ENCODE measurements at regions of chr19 and their contacts with region 1.

Region 1: DNA sequence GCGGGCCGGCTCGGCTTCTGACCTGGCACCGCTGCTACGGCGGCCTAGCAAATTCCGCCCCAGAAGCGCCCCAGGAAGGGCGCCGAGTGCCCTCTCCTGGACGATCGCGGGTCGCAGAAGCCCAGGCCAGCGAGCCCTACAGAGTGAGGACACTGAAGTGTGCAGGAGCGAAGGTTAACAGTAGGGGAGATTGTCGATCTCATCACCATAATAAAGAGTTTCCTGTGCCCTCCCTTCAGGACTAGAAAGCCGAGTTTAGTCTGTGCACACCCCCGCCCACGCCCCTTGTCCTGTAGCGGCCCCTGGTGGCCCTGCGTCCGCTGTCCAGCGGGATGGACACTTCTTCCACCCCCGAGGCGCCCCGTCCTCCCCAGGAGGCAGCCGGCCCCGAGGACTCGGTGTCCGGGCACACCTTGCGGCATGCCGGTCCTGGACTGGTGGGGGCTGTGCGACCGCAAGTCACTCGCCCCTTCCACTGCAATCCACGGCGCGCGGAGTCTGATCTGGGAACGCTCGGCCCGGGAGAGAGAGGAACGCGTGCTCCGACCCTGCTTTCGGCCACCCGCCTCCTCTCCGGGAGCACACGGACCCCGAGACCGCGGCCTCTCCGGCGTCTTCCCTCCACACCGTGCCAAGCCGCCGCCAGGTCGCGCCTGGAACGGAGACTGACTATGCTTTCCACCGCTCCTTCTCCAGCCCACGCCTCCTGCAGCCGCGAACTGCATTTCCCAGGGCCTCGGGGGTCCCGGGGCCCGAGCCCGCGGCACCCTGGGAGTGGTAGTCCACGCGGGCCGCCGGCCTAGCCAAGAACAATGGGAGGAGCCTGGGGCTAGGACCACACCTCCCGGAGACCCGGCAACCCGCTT is 769 bp upstream of the KMT2B start:
- DNase-seq: peak; percentile 97 to 99 (median 98)
- H3K4me3 ChIP-seq: peak overlapping the region; percentile 68 to 81
- H3K4me3 Mint-ChIP-seq: peak overlapping the region; percentile 91 to 99 (median 94)
- H3K27ac ChIP-seq: peak overlapping the region; percentile 71
- H3K27ac Mint-ChIP-seq: peak overlapping the region; percentile 90 to 99 (median 94)
- H3K4me1 ChIP-seq: peaks cover 59% of the 10 kb centered on the region
- H3K4me1 Mint-ChIP-seq: peaks cover 44 to 72% (median 55%) of the 10 kb centered on the region in 4 donors
- H3K27me3 ChIP-seq: no peaks in the 10 kb centered on the region
- H3K27me3 Mint-ChIP-seq: no peaks in the 10 kb centered on the region

Region 2: GRCh38 chr19:35330475-35330874 is 386.6 kb before region 1 on chr19:
- CTCF ChIA-PET with region 1: no interaction called
- POLR2A ChIA-PET with region 1: no interaction called
- intact Hi-C with region 1: no loop called
- DNase-seq: peak in 1 of 5 donors; percentile 18
- H3K4me3 ChIP-seq: no peak overlapping the region
- H3K4me3 Mint-ChIP-seq: no peak overlapping the region
- H3K27ac ChIP-seq: no peak overlapping the region
- H3K27ac Mint-ChIP-seq: no peak overlapping the region
- H3K4me1 ChIP-seq: peaks cover 9% of the 10 kb centered on the region
- H3K4me1 Mint-ChIP-seq: peaks cover 6 to 15% (median 10%) of the 10 kb centered on the region in 4 donors
- H3K27me3 ChIP-seq: no peaks in the 10 kb centered on the region
- H3K27me3 Mint-ChIP-seq: peaks cover 7 to 22% of the 10 kb centered on the region in 2 donors

Region 3: DNA sequence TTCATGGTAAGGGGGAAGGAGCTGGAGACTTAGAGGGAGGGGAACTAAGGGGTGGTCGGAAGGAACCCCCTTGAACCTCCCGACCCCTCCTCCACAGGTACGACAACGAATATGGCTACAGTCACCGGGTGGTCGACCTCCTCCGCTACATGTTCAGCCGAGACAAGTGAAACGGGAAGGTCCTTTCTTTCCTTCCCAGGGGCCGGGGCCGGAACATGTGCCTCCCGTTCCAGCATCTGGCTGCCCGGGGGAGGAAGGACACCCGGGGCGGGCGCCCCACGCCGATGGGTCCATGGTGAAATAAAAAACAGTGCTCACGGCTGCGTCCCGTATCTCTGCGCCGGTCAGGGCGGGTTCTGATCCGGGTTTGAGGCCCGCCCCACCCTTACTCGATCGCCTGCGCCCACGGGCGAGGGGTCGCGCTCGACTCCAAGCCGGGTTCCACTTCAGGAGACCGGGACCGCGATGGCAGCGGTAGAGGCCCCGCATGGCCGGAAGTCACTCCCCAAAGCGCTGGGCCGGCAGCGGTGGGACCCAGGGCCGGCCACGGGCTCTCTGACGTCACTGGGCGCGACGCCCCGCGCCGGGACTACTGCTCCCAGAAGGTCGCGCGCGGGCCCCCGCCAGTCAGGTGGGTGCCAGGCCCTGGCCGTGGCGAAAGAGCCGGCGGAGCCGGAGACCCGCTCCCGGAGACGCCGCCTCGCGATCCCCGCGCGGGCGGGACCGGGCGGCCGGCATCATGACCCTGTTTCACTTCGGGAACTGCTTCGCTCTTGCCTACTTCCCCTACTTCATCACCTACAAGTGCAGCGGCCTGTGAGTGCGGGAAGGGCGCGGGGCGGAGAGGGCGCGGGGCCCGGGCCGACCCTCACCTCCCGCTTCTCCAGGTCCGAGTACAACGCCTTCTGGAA is 171.8 kb before region 1 on chr19 and contains the start of gene TMEM147:
- CTCF ChIA-PET with region 1: no interaction called
- POLR2A ChIA-PET with region 1: no interaction called
- intact Hi-C with region 1: loop called (anchors 1 kb)
- DNase-seq: peak; percentile 68 to 76 (median 73)
- H3K4me3 ChIP-seq: peak within 1 kb of the TSS; percentile 36 to 84
- H3K4me3 Mint-ChIP-seq: peak within 1 kb of the TSS; percentile 87 to 92 (median 90)
- H3K27ac ChIP-seq: peak within 1 kb of the TSS; percentile 76
- H3K27ac Mint-ChIP-seq: peak within 1 kb of the TSS; percentile 87 to 96 (median 93)
- H3K4me1 ChIP-seq: peaks cover 24% of the 10 kb centered on the region
- H3K4me1 Mint-ChIP-seq: peaks cover 23 to 46% (median 33%) of the 10 kb centered on the region in 4 donors
- H3K27me3 ChIP-seq: no peaks in the 10 kb centered on the region
- H3K27me3 Mint-ChIP-seq: no peaks in the 10 kb centered on the region
- total RNA-seq, gene TMEM147: 41.3 to 41.9 TPM

Region 4: GRCh38 chr19:35693830-35694599 is 23.0 kb before region 1 on chr19:
- CTCF ChIA-PET with region 1: interaction called, 54 read pairs
- POLR2A ChIA-PET with region 1: interaction called, 3 read pairs
- intact Hi-C with region 1: loop called (anchors 1 kb)
- DNase-seq: peak; percentile 87 to 89 (median 88)
- H3K4me3 ChIP-seq: no peak overlapping the region
- H3K4me3 Mint-ChIP-seq: peak overlapping the region in 1 of 8 donors; percentile 57
- H3K27ac ChIP-seq: no peak overlapping the region
- H3K27ac Mint-ChIP-seq: peak overlapping the region in 6 of 7 donors; percentile 4 to 75 (median 28)
- H3K4me1 ChIP-seq: no peaks in the 10 kb centered on the region
- H3K4me1 Mint-ChIP-seq: peaks cover 0 to 5% (median 2%) of the 10 kb centered on the region in 4 donors
- H3K27me3 ChIP-seq: no peaks in the 10 kb centered on the region
- H3K27me3 Mint-ChIP-seq: no peaks in the 10 kb centered on the region

Region 5: GRCh38 chr19:35731358-35731757 is 14.3 kb after region 1 on chr19:
- CTCF ChIA-PET with region 1: interaction called, 5 read pairs
- POLR2A ChIA-PET with region 1: interaction called, 16 read pairs
- intact Hi-C with region 1: no loop called
- DNase-seq: no peak
- H3K4me3 ChIP-seq: no peak overlapping the region
- H3K4me3 Mint-ChIP-seq: no peak overlapping the region
- H3K27ac ChIP-seq: no peak overlapping the region
- H3K27ac Mint-ChIP-seq: peak overlapping the region in 3 of 7 donors; percentile 29 to 81 (median 43)
- H3K4me1 ChIP-seq: peaks cover 3% of the 10 kb centered on the region
- H3K4me1 Mint-ChIP-seq: peaks cover 4 to 17% (median 9%) of the 10 kb centered on the region in 4 donors
- H3K27me3 ChIP-seq: no peaks in the 10 kb centered on the region
- H3K27me3 Mint-ChIP-seq: no peaks in the 10 kb centered on the region

Region 6: DNA sequence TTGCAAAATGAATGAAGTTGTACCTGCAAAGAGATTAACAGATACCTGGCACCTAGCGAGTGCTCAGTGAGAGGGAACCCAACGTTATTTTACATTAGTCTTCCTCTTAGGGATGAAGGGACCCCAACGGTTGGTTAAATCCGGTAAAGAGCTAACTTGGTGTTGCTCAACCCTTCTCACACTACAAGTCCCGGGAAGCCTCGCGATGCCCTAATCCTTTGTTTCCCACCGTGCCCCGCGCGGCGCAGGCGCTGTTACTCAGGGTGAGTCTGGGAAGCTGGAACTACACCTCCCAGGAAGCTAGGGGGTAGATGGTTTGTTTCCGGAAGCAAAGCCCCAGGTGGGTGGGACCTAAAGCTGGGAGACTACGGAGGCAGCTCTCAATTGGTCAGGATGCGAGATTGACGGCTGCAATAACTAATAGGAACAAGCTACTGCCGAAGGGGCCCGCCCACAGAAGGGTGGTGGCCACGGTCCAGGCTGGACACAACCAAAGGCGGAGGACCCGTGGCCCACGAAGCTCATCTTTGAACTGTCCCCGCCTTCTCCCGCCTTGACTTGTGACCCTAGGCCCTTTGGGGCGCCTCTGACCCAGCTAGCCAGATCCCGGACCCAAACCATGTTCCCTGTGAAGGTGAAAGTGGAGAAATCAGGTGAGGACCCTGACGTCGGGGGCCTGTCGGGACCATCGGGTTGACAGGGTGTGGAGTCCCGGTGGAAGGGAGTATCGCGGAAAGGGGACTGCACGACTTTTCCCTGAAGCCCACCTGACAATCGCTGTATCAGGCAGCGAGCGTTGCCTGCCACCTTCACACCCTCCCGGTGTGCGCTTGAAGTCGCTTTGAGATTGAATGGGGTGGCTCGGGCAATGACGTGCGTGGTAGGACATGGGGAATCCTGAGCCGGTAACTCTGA is 31.3 kb after region 1 on chr19 and contains the start of gene LIN37:
- CTCF ChIA-PET with region 1: interaction called, 3 read pairs
- POLR2A ChIA-PET with region 1: interaction called, 51 read pairs
- intact Hi-C with region 1: loop called (anchors 1 kb)
- DNase-seq: peak; percentile 98 to 100 (median 99)
- H3K4me3 ChIP-seq: peak within 1 kb of the TSS; percentile 63 to 93
- H3K4me3 Mint-ChIP-seq: peak within 1 kb of the TSS; percentile 97 to 99 (median 98)
- H3K27ac ChIP-seq: peak within 1 kb of the TSS; percentile 82
- H3K27ac Mint-ChIP-seq: peak within 1 kb of the TSS; percentile 88 to 98 (median 97)
- H3K4me1 ChIP-seq: peaks cover 42% of the 10 kb centered on the region
- H3K4me1 Mint-ChIP-seq: peaks cover 25 to 49% (median 39%) of the 10 kb centered on the region in 4 donors
- H3K27me3 ChIP-seq: no peaks in the 10 kb centered on the region
- H3K27me3 Mint-ChIP-seq: no peaks in the 10 kb centered on the region
- total RNA-seq, gene LIN37: 26.3 to 29.4 TPM

Region 7: DNA sequence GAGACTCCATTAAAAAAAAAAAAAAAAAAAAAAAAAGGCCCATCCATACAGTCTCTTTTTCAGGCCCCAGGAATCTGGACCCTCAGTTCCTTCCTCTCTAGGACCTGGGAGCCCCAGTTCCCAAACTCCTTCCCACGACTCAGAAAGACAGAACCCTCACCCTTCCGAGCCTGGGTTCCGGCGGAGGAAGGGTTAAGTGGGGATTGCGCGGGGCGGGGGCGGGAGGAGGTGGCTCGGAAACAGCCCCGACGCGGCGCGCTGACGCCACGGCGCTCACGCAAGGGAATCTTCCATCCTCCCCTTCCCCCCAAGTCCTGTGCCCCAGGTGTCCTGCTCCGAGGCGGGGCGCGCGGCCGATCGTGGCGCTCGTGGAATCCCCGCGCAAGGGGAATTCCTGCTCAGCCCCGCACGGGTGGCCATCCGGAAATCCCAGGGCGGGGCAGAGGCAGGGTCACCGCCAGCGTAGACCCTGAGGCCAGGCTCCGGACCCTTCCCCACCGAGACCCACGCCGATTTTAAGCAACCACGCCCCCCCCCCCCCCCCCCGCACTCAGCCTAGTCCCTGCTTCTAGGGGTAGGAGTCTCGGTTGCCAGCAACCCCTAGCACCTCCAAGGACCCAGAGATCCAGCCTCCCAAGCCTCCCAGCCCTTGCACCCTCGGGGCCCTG is 182.6 kb after region 1 on chr19:
- CTCF ChIA-PET with region 1: no interaction called
- POLR2A ChIA-PET with region 1: interaction called, 4 read pairs
- intact Hi-C with region 1: loop called (anchors 1 kb)
- DNase-seq: peak; percentile 86 to 94 (median 88)
- H3K4me3 ChIP-seq: peak overlapping the region; percentile 52 to 96
- H3K4me3 Mint-ChIP-seq: peak overlapping the region; percentile 94 to 100 (median 98)
- H3K27ac ChIP-seq: peak overlapping the region; percentile 100
- H3K27ac Mint-ChIP-seq: peak overlapping the region; percentile 92 to 99 (median 98)
- H3K4me1 ChIP-seq: peaks cover 67% of the 10 kb centered on the region
- H3K4me1 Mint-ChIP-seq: peaks cover 23 to 73% (median 53%) of the 10 kb centered on the region in 4 donors
- H3K27me3 ChIP-seq: no peaks in the 10 kb centered on the region
- H3K27me3 Mint-ChIP-seq: no peaks in the 10 kb centered on the region

Region 8: GRCh38 chr19:36054119-36054732 is 337.2 kb after region 1 on chr19 and contains the start of gene THAP8:
- CTCF ChIA-PET with region 1: no interaction called
- POLR2A ChIA-PET with region 1: no interaction called
- intact Hi-C with region 1: loop called (anchors 1 kb)
- DNase-seq: peak; percentile 99 to 100 (median 100)
- H3K4me3 ChIP-seq: peak within 1 kb of the TSS; percentile 79 to 93
- H3K4me3 Mint-ChIP-seq: peak within 1 kb of the TSS; percentile 96 to 100 (median 99)
- H3K27ac ChIP-seq: peak within 1 kb of the TSS; percentile 78
- H3K27ac Mint-ChIP-seq: peak within 1 kb of the TSS; percentile 98 to 99 (median 98)
- H3K4me1 ChIP-seq: peaks cover 11% of the 10 kb centered on the region
- H3K4me1 Mint-ChIP-seq: peaks cover 16 to 41% (median 21%) of the 10 kb centered on the region in 4 donors
- H3K27me3 ChIP-seq: no peaks in the 10 kb centered on the region
- H3K27me3 Mint-ChIP-seq: no peaks in the 10 kb centered on the region
- total RNA-seq, gene THAP8: 5.1 to 7.0 TPM

Measured in CD4-positive, alpha-beta memory T cell (primary cell).